ENCODE measurements at regions of chr18 and their contacts with region 1.

Region 1: DNA sequence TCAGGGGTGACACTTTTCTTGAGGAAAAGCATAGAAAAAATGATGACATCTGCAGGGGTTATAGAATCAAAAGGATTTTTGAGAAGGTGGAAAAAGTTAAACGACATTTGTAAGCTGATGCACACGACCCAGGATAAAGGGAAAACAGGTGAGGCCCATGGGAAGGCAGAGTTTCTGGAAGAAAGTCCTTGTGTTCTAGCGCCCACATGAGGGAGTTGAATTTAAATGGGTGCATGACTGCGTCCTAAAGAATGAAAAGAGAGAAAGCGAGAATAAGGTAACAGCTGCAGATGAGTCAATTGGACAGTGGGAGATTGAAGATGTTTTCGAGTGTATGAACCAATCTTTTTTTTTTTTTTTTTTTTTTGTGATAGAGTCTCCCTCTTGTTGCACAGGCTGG is 158.1 kb downstream of the GALR1 start:
- DNase-seq: no peak
- ATAC-seq: no peak
- H3K4me3 Mint-ChIP-seq: no peak overlapping the region
- H3K27ac Mint-ChIP-seq: no peak overlapping the region
- H3K4me1 Mint-ChIP-seq: no peaks in the 10 kb centered on the region
- H3K27me3 Mint-ChIP-seq: no peaks in the 10 kb centered on the region

Region 2: DNA sequence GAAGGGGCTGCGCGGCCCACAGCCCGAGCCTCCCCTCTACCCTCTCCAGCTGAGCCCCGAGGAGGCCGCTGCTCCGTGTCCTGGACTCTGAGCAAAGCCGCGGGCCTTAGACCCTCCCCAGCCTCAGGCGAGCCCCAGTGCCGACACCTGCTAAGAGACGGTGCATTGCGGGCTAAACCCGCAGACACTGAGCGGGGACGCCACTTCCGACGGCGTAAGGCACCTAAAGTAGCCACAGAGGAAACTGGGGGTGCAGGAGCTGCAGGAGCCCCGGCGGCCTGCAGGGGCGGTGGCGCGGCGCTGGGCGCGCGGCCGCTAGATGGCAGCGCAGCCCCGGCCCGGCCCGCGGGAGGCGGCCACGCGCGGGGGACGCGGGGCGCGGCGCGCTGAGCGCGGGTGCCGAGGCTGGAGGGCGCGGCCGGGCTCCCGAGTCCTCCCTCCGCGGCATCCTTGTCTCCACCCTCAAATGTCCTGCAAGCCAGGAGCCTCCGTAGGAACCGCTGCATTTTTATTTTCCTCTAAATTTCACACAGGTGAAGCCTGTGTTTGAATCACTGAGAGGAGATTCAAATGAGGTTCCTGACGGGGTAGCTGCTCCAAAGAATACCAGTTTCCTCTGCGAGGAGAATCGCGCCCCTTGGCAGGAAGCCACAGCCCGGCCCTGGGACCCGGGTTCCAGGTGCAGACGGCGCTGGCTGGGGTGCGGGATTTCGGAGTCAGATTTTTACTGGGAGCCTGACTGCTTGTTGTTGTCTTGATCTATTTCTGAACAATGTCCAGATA is 492.4 kb after region 1 on chr18:
- CTCF ChIA-PET with region 1: no interaction called
- POLR2A ChIA-PET with region 1: no interaction called
- intact Hi-C with region 1: loop called in 1 of 2 experiments (anchors 5 kb)
- DNase-seq: peak; percentile 76
- ATAC-seq: peak; percentile 98
- H3K4me3 Mint-ChIP-seq: peak overlapping the region; percentile 40
- H3K27ac Mint-ChIP-seq: no peak overlapping the region
- H3K4me1 Mint-ChIP-seq: peaks cover 4% of the 10 kb centered on the region
- H3K27me3 Mint-ChIP-seq: peaks cover 8% of the 10 kb centered on the region

Measured in activated CD4-positive, alpha-beta T cell treated with anti-CD3 and anti-CD28 coated beads for 36 hours (primary cell).